ENCODE measurements at regions of chr15 and their contacts with region 1.

Region 1: GRCh38 chr15:51536965-51537574 is 85.5 kb downstream of the DMXL2 start:
- DNase-seq: no peak
- H3K4me3 ChIP-seq: no peak overlapping the region
- H3K27ac ChIP-seq: no peak overlapping the region
- H3K4me1 ChIP-seq: no peaks in the 10 kb centered on the region
- H3K27me3 ChIP-seq: no peaks in the 10 kb centered on the region
- CTCF ChIP-seq: peak; percentile 41 to 53 (median 43)
- EP300 ChIP-seq: no peak
- POLR2A ChIP-seq: no peak

Region 2: GRCh38 chr15:51484781-51485180 is 52.3 kb before region 1 on chr15:
- in situ Hi-C with region 1: no loop called
- intact Hi-C with region 1: no loop called
- DNase-seq: no peak
- H3K4me3 ChIP-seq: no peak overlapping the region
- H3K27ac ChIP-seq: no peak overlapping the region
- H3K4me1 ChIP-seq: no peaks in the 10 kb centered on the region
- H3K27me3 ChIP-seq: no peaks in the 10 kb centered on the region
- CTCF ChIP-seq: no peak
- EP300 ChIP-seq: no peak
- POLR2A ChIP-seq: no peak

Region 3: GRCh38 chr15:51561271-51561670 is 24.2 kb after region 1 on chr15:
- in situ Hi-C with region 1: no loop called
- intact Hi-C with region 1: loop called (anchors 2 kb)
- DNase-seq: no peak
- H3K4me3 ChIP-seq: no peak overlapping the region
- H3K27ac ChIP-seq: no peak overlapping the region
- H3K4me1 ChIP-seq: peaks cover 0 to 6% (median 0%) of the 10 kb centered on the region in 4 donors
- H3K27me3 ChIP-seq: no peaks in the 10 kb centered on the region
- CTCF ChIP-seq: no peak
- EP300 ChIP-seq: no peak
- POLR2A ChIP-seq: no peak

Measured in transverse colon (tissue), 4 donors.